ENCODE measurements at regions of chr21 and their contacts with region 1.

Region 1: DNA sequence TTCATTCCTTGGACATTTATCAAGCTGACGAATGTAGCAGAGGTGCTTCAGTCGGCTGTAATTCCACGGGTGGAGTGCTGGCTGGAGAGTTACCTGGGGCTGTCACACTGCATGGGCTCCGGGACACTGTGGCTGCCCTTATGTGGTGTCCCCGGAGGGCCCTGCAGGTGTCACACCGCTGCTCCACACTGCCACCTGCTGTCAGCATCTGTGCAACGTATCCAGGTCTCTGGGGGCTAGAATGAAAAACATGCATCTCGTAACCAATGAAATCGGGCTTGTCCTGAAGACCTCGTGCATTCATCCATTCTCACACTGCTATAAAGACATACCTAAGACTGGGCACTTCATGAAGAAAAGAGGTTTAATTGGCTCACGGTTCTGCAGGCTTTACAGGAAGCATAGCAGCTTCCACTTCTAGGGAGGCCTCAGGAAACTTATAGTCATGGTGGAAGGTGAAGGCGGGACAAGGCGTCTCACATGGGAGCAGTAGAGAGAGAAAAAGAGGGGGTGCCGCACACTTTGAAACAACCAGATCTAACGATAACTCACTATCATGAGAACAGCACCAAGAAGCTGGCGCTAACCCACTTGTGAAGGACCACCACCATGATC is 46.7 kb upstream of the PCBP3 start:
- DNase-seq: peak; percentile 65 to 85 (median 79)
- ATAC-seq: peak; percentile 82
- H3K4me3 ChIP-seq: no peak overlapping the region
- H3K4me3 Mint-ChIP-seq: peak overlapping the region in 1 of 10 donors; percentile 6
- H3K27ac ChIP-seq: no peak overlapping the region
- H3K27ac Mint-ChIP-seq: peak overlapping the region in 7 of 9 donors; percentile 7 to 88 (median 82)
- H3K4me1 ChIP-seq: peaks cover 10 to 20% of the 10 kb centered on the region in 2 donors
- H3K4me1 Mint-ChIP-seq: peaks cover 9 to 29% (median 13%) of the 10 kb centered on the region in 7 donors
- H3K27me3 ChIP-seq: no peaks in the 10 kb centered on the region
- H3K27me3 Mint-ChIP-seq: no peaks in the 10 kb centered on the region

Region 2: DNA sequence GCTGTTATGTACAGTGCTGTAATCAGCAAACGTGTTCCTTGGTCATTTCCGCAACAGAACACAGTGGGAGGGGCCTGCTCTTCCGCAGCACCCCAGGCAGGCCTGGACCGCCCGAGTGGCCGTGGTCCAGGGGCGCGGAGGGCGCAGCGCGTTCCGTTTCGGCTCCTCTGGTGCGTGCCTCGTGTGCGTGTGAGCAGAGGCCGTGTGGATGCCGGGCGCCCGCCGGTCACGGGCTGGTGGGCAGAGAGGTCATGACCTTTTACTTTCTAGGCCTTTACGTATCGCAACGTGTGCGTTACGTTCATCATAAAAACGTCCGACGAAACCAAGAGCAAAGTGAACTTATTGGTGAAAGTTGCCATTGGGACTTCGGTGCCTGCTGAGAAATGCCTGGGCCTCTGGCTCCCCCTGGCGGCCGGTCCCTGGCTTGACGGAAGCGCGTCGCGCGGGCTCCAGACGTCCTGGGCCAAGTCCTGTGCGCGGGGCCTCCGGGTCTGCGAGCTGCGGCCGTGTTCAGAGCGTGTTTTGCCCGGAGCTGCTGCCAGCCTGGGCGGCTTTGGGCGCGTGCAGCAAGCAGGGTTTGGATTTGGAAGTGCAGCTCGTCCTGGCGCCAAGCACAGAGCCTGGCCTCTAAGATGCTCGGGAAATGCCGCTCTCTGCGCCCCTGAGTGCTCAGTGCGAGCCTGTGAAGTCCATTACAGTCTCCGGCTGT is 157.5 kb before region 1 on chr21:
- CTCF ChIA-PET with region 1: no interaction called
- POLR2A ChIA-PET with region 1: no interaction called
- intact Hi-C with region 1: loop called in 1 of 2 experiments (anchors 2 kb)
- DNase-seq: peak; percentile 72 to 91 (median 85)
- ATAC-seq: peak; percentile 90
- H3K4me3 ChIP-seq: peak overlapping the region; percentile 46
- H3K4me3 Mint-ChIP-seq: peak overlapping the region; percentile 66 to 82 (median 73)
- H3K27ac ChIP-seq: peak overlapping the region; percentile 66
- H3K27ac Mint-ChIP-seq: peak overlapping the region in 7 of 9 donors; percentile 25 to 92 (median 66)
- H3K4me1 ChIP-seq: peaks cover 4% of the 10 kb centered on the region in 2 donors
- H3K4me1 Mint-ChIP-seq: peaks cover 2 to 16% (median 6%) of the 10 kb centered on the region in 7 donors
- H3K27me3 ChIP-seq: no peaks in the 10 kb centered on the region
- H3K27me3 Mint-ChIP-seq: peaks cover 0 to 5% (median 0%) of the 10 kb centered on the region in 5 donors

Region 3: DNA sequence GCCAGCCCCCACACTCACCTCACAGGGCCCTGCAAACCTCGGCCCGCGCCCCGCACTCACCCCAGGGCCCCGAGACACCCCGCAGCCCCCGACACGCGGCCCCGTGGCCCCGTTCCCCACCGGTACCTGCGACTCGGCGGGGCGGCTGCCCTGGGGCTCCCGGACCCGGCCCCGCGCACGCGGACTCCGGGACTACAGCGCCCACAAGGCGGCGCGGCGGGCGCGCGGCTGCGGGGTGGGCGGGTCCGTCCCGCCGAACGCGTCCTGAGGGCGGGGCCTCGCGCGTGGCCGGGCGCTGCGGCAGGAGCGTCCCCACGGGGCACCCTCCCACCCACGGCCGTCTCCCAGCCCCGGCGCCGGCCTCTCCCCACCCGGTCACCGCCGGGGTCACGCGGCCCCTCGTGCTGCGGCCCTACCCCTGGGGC is 54.6 kb before region 1 on chr21 and contains the start of gene SLC19A1:
- CTCF ChIA-PET with region 1: interaction called, 6 read pairs
- POLR2A ChIA-PET with region 1: no interaction called
- intact Hi-C with region 1: loop called in 1 of 2 experiments (anchors 1 kb)
- DNase-seq: peak; percentile 55 to 89 (median 75)
- ATAC-seq: peak; percentile 93
- H3K4me3 ChIP-seq: peak within 1 kb of the TSS; percentile 61
- H3K4me3 Mint-ChIP-seq: peak within 1 kb of the TSS; percentile 66 to 89 (median 78)
- H3K27ac ChIP-seq: peak within 1 kb of the TSS; percentile 80
- H3K27ac Mint-ChIP-seq: peak within 1 kb of the TSS in 7 of 9 donors; percentile 14 to 87 (median 74)
- H3K4me1 ChIP-seq: peaks cover 7 to 15% of the 10 kb centered on the region in 2 donors
- H3K4me1 Mint-ChIP-seq: peaks cover 7 to 18% (median 15%) of the 10 kb centered on the region in 7 donors
- H3K27me3 ChIP-seq: no peaks in the 10 kb centered on the region
- H3K27me3 Mint-ChIP-seq: no peaks in the 10 kb centered on the region
- total RNA-seq, gene SLC19A1: 10.5 to 49.1 (median 21.6) TPM

Region 4: GRCh38 chr21:45615145-45615711 is 18.4 kb after region 1 on chr21:
- CTCF ChIA-PET with region 1: no interaction called
- POLR2A ChIA-PET with region 1: interaction called, 4 read pairs
- intact Hi-C with region 1: loop called (anchors 1 kb)
- DNase-seq: peak; percentile 73 to 95 (median 93)
- ATAC-seq: peak; percentile 94
- H3K4me3 ChIP-seq: peak overlapping the region; percentile 45
- H3K4me3 Mint-ChIP-seq: peak overlapping the region; percentile 79 to 95 (median 87)
- H3K27ac ChIP-seq: peak overlapping the region; percentile 95
- H3K27ac Mint-ChIP-seq: peak overlapping the region; percentile 73 to 100 (median 98)
- H3K4me1 ChIP-seq: peaks cover 16 to 41% of the 10 kb centered on the region in 2 donors
- H3K4me1 Mint-ChIP-seq: peaks cover 17 to 58% (median 48%) of the 10 kb centered on the region in 7 donors
- H3K27me3 ChIP-seq: no peaks in the 10 kb centered on the region
- H3K27me3 Mint-ChIP-seq: peaks cover 0 to 34% (median 0%) of the 10 kb centered on the region in 5 donors

Measured in naive thymus-derived CD4-positive, alpha-beta T cell (primary cell).